Ovary (tissue), 10 donors: ENCODE measurements at regions of chr6 and their contacts with region 1.

Region 1: GRCh38 chr6:30814136-30815040 is 69.9 kb upstream of the DDR1 start:
- DNase-seq: peak in 1 of 5 donors; percentile 33
- H3K4me3 ChIP-seq: no peak overlapping the region
- H3K27ac ChIP-seq: no peak overlapping the region
- H3K4me1 ChIP-seq: peaks cover 7% of the 10 kb centered on the region
- H3K27me3 ChIP-seq: no peaks in the 10 kb centered on the region
- CTCF ChIP-seq: no peak
- EP300 ChIP-seq: no peak
- POLR2A ChIP-seq: no peak

Region 2: GRCh38 chr6:30752157-30752927 is 62.0 kb before region 1 on chr6:
- intact Hi-C with region 1: loop called in 1 of 4 experiments (anchors 5 kb)
- DNase-seq: peak; percentile 74 to 94 (median 91)
- H3K4me3 ChIP-seq: no peak overlapping the region
- H3K27ac ChIP-seq: peak overlapping the region in 1 of 2 donors; percentile 80
- H3K4me1 ChIP-seq: peaks cover 18% of the 10 kb centered on the region
- H3K27me3 ChIP-seq: no peaks in the 10 kb centered on the region
- CTCF ChIP-seq: no peak
- EP300 ChIP-seq: no peak
- POLR2A ChIP-seq: no peak

Region 3: GRCh38 chr6:31058128-31058894 is 243.9 kb after region 1 on chr6:
- intact Hi-C with region 1: no loop called
- DNase-seq: no peak
- H3K4me3 ChIP-seq: no peak overlapping the region
- H3K27ac ChIP-seq: no peak overlapping the region
- H3K4me1 ChIP-seq: no peaks in the 10 kb centered on the region
- H3K27me3 ChIP-seq: no peaks in the 10 kb centered on the region
- CTCF ChIP-seq: peak in 1 of 3 donors; percentile 12
- EP300 ChIP-seq: no peak
- POLR2A ChIP-seq: no peak